A549 (cell line): ENCODE measurements at regions of chr20 and their contacts with region 1.

Region 1: DNA sequence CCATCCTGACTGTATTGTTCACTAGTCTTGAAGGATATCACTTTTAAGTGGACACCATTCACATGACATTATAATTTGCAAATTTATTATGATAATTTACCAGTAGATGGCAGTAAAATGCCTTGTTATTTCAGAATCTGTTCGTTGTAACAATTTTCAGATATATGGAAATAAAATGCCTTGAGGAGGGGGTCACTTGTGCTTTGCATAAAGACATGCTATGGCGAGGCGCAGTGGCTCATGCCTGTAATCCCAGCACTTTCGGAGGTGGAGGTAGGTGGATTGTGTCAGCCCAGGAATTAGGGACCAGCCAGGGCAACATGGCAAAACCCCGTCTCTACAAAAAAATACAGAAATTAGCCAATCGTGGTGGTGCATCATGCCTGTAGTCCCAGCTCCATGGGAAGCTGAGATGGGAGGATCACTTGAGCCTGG is 9.0 kb upstream of the NCOA6 start:
- DNase-seq: peak; percentile 36 to 46
- ATAC-seq: peak; percentile 81 to 83
- H3K4me3 ChIP-seq: peak overlapping the region; percentile 28; the same call in 1 of the 3 replicates
- H3K27ac ChIP-seq: peak overlapping the region in 1 of 2 experiments; percentile 69; a peak in 2 of 6 replicates
- H3K4me1 ChIP-seq: no peaks in the 10 kb centered on the region
- CTCF ChIP-seq: peak; percentile 67
- EP300 ChIP-seq: no peak
- POLR2A ChIP-seq: no peak
- RAD21 ChIP-seq: peak; percentile 70 to 80

Region 2: DNA sequence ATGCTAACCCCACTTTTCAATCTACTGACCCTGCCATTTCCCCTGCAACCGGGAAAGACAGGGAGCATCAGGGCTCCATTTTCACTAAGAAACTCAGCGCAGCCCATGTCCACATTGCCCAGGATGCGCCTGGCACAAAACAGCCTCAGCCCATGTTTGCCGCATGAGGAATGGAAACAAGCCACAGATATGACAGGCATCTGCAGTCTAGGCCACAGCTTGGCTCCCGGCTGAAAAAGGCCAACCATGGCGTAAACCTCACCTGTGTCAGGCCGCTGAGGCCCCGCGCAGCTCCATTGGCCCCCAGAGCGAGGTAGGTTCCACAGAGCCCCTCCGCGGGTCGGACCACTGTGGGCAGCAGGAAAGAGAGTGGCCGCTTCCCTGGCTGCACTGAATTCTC is 16.5 kb after region 1 on chr20:
- CTCF ChIA-PET with region 1: interaction called, 24 read pairs
- POLR2A ChIA-PET with region 1: no interaction called
- DNase-seq: no peak
- ATAC-seq: no peak
- H3K4me3 ChIP-seq: no peak overlapping the region
- H3K27ac ChIP-seq: no peak overlapping the region
- H3K4me1 ChIP-seq: no peaks in the 10 kb centered on the region
- CTCF ChIP-seq: no peak
- EP300 ChIP-seq: no peak
- POLR2A ChIP-seq: no peak
- RAD21 ChIP-seq: no peak

Region 3: GRCh38 chr20:35079472-35080347 is 245.2 kb after region 1 on chr20:
- CTCF ChIA-PET with region 1: no interaction called
- POLR2A ChIA-PET with region 1: no interaction called
- DNase-seq: no peak
- ATAC-seq: no peak
- H3K4me3 ChIP-seq: no peak overlapping the region
- H3K27ac ChIP-seq: no peak overlapping the region
- H3K4me1 ChIP-seq: no peaks in the 10 kb centered on the region
- CTCF ChIP-seq: no peak
- EP300 ChIP-seq: no peak
- POLR2A ChIP-seq: no peak
- RAD21 ChIP-seq: no peak